ENCODE measurements at regions of chr12 and their contacts with region 1.

Region 1: GRCh38 chr12:114508529-114509129 is 102.7 kb upstream of the TBX5 start:
- DNase-seq: peak; percentile 73
- H3K4me3 Mint-ChIP-seq: no peak overlapping the region
- H3K27ac Mint-ChIP-seq: no peak overlapping the region
- H3K4me1 Mint-ChIP-seq: no peaks in the 10 kb centered on the region
- H3K27me3 Mint-ChIP-seq: peaks cover 60% of the 10 kb centered on the region
- CTCF ChIP-seq: peak; percentile 61

Region 2: GRCh38 chr12:113965951-113966797 is 542.5 kb before region 1 on chr12 and contains the start of gene RBM19:
- CTCF ChIA-PET with region 1: interaction called, 19 read pairs
- POLR2A ChIA-PET with region 1: no interaction called
- intact Hi-C with region 1: loop called (anchors 1 kb)
- DNase-seq: peak; percentile 99
- H3K4me3 Mint-ChIP-seq: peak within 1 kb of the TSS; percentile 98
- H3K27ac Mint-ChIP-seq: peak within 1 kb of the TSS; percentile 98
- H3K4me1 Mint-ChIP-seq: peaks cover 27% of the 10 kb centered on the region
- H3K27me3 Mint-ChIP-seq: no peaks in the 10 kb centered on the region
- CTCF ChIP-seq: peak; percentile 89
- total RNA-seq, gene RBM19: 22.0 and 29.2 TPM in 2 replicates

Region 3: GRCh38 chr12:114013575-114014345 is 494.9 kb before region 1 on chr12:
- CTCF ChIA-PET with region 1: interaction called, 4 read pairs
- POLR2A ChIA-PET with region 1: no interaction called
- intact Hi-C with region 1: loop called (anchors 1 kb)
- DNase-seq: peak; percentile 45
- H3K4me3 Mint-ChIP-seq: no peak overlapping the region
- H3K27ac Mint-ChIP-seq: no peak overlapping the region
- H3K4me1 Mint-ChIP-seq: peaks cover 8% of the 10 kb centered on the region
- H3K27me3 Mint-ChIP-seq: peaks cover 35% of the 10 kb centered on the region
- CTCF ChIP-seq: peak; percentile 31

Region 4: DNA sequence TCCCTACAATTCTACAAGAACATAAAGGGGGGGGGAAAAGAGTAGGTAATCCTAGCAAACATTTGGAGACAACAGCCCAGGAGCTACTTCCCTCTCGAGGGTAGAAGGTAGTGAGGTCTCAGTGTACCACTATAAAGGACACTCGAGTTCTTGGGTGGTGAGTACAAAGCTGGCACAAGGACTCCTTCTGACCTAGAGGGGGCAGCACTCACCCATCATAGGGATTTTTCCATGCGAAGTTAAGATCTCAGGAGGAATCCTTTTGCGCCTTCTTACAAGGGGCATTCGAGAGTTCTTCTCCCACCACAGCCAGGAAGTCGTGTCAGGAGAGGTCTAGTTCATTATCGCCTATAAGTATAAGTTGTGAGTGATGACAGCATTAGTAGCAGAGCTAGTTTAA is 342.3 kb before region 1 on chr12:
- CTCF ChIA-PET with region 1: interaction called, 10 read pairs
- POLR2A ChIA-PET with region 1: no interaction called
- intact Hi-C with region 1: loop called (anchors 10 kb)
- DNase-seq: peak; percentile 60
- H3K4me3 Mint-ChIP-seq: no peak overlapping the region
- H3K27ac Mint-ChIP-seq: no peak overlapping the region
- H3K4me1 Mint-ChIP-seq: peaks cover 21% of the 10 kb centered on the region
- H3K27me3 Mint-ChIP-seq: no peaks in the 10 kb centered on the region
- CTCF ChIP-seq: peak; percentile 28

Region 5: DNA sequence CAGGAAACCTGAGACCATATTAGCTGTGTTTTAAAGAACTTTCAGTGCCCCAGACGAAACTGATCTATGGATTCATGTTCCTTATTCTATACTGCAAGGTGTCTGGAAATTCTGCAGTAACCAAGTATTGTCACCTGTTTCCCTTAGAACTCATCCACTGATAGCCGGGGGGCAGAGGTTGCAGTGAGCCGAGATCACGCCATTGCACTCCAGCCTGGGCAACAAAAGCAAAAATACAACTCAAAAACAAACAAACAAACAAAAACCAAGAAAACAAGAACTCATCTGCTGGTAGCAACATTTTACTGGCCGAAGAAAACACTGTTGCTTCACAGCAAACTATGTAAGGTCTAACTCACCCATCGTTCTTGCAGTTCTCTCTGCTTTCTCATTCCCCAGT is 11.6 kb after region 1 on chr12:
- CTCF ChIA-PET with region 1: interaction called, 19 read pairs
- POLR2A ChIA-PET with region 1: interaction called, 3 read pairs
- intact Hi-C with region 1: no loop called
- DNase-seq: no peak
- H3K4me3 Mint-ChIP-seq: no peak overlapping the region
- H3K27ac Mint-ChIP-seq: no peak overlapping the region
- H3K4me1 Mint-ChIP-seq: no peaks in the 10 kb centered on the region
- H3K27me3 Mint-ChIP-seq: peaks cover 28% of the 10 kb centered on the region
- CTCF ChIP-seq: no peak